ENCODE measurements at regions of chr17 and their contacts with region 1.

Region 1: GRCh38 chr17:74212913-74213791 is at the start of gene TTYH2:
- DNase-seq: peak; percentile 46 to 78 (median 55)
- ATAC-seq: peak; percentile 81
- H3K4me3 ChIP-seq: peak within 1 kb of the TSS; percentile 62
- H3K4me3 Mint-ChIP-seq: peak within 1 kb of the TSS; percentile 80 to 92 (median 91)
- H3K27ac ChIP-seq: peak within 1 kb of the TSS; percentile 55
- H3K27ac Mint-ChIP-seq: peak within 1 kb of the TSS; percentile 57 to 92 (median 82)
- H3K4me1 ChIP-seq: peaks cover 23 to 37% of the 10 kb centered on the region in 2 donors
- H3K4me1 Mint-ChIP-seq: peaks cover 27 to 51% (median 40%) of the 10 kb centered on the region in 7 donors
- H3K27me3 ChIP-seq: no peaks in the 10 kb centered on the region
- H3K27me3 Mint-ChIP-seq: peaks cover 0 to 5% (median 0%) of the 10 kb centered on the region in 5 donors
- total RNA-seq, gene TTYH2: 5.5 to 15.8 (median 9.9) TPM

Region 2: DNA sequence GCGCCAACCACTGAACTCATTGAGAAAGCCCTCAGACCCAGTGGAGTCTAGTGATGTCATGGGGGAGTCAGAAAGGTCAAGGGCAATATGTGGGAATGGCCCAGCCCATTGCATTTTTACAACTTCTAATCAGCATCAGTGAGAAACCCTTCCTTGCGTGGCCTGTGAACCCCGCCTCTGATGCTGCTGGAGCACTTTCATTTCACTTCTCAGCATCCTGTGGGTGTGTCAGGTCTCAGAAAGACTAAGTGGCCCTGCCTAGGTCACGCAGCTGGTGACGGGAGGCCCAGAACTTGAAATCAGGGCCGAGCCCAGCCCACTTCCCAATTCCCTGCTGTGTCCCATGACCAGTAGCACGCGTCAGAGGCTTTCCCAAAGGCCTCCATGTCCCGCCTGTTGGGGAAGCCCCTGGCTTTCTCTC is 67.0 kb after region 1 on chr17:
- CTCF ChIA-PET with region 1: interaction called, 3 read pairs
- POLR2A ChIA-PET with region 1: interaction called, 16 read pairs
- intact Hi-C with region 1: loop called (anchors 1 to 5 kb)
- DNase-seq: peak in 8 of 9 donors; percentile 16 to 59 (median 45)
- ATAC-seq: peak; percentile 87
- H3K4me3 ChIP-seq: no peak overlapping the region
- H3K4me3 Mint-ChIP-seq: peak overlapping the region in 7 of 10 donors; percentile 3 to 65 (median 25)
- H3K27ac ChIP-seq: peak overlapping the region; percentile 67
- H3K27ac Mint-ChIP-seq: peak overlapping the region; percentile 79 to 96 (median 90)
- H3K4me1 ChIP-seq: peaks cover 40 to 54% of the 10 kb centered on the region in 2 donors
- H3K4me1 Mint-ChIP-seq: peaks cover 16 to 67% (median 33%) of the 10 kb centered on the region in 7 donors
- H3K27me3 ChIP-seq: no peaks in the 10 kb centered on the region
- H3K27me3 Mint-ChIP-seq: no peaks in the 10 kb centered on the region

Region 3: DNA sequence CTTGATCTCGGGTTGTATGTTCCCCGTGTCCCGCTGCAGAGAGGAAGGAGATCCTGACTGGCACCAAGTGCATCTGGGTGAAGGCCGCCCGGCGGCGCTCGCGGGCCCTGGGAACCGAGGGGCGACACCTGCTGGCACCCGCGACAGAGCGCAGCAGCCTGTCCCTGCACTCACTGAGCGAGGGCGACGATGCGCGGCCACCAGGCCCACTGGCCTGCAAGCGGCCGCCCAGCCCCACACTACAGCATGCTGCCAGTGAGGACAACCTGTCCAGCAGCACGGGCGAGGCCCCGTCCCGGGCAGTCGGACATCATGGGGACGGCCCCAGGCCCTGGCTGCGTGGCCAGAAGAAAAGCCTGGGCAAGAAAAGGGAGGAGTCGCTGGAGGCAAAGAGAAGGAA is 141.0 kb after region 1 on chr17:
- CTCF ChIA-PET with region 1: interaction called, 3 read pairs
- POLR2A ChIA-PET with region 1: no interaction called
- intact Hi-C with region 1: loop called in 1 of 2 experiments (anchors 2 kb)
- DNase-seq: peak in 7 of 9 donors; percentile 15 to 71 (median 21)
- ATAC-seq: peak; percentile 75
- H3K4me3 ChIP-seq: no peak overlapping the region
- H3K4me3 Mint-ChIP-seq: no peak overlapping the region
- H3K27ac ChIP-seq: no peak overlapping the region
- H3K27ac Mint-ChIP-seq: no peak overlapping the region
- H3K4me1 ChIP-seq: no peaks in the 10 kb centered on the region
- H3K4me1 Mint-ChIP-seq: peaks cover 0 to 12% (median 8%) of the 10 kb centered on the region in 7 donors
- H3K27me3 ChIP-seq: peaks cover 0 to 16% of the 10 kb centered on the region in 2 donors
- H3K27me3 Mint-ChIP-seq: peaks cover 41 to 73% (median 45%) of the 10 kb centered on the region in 5 donors

Region 4: DNA sequence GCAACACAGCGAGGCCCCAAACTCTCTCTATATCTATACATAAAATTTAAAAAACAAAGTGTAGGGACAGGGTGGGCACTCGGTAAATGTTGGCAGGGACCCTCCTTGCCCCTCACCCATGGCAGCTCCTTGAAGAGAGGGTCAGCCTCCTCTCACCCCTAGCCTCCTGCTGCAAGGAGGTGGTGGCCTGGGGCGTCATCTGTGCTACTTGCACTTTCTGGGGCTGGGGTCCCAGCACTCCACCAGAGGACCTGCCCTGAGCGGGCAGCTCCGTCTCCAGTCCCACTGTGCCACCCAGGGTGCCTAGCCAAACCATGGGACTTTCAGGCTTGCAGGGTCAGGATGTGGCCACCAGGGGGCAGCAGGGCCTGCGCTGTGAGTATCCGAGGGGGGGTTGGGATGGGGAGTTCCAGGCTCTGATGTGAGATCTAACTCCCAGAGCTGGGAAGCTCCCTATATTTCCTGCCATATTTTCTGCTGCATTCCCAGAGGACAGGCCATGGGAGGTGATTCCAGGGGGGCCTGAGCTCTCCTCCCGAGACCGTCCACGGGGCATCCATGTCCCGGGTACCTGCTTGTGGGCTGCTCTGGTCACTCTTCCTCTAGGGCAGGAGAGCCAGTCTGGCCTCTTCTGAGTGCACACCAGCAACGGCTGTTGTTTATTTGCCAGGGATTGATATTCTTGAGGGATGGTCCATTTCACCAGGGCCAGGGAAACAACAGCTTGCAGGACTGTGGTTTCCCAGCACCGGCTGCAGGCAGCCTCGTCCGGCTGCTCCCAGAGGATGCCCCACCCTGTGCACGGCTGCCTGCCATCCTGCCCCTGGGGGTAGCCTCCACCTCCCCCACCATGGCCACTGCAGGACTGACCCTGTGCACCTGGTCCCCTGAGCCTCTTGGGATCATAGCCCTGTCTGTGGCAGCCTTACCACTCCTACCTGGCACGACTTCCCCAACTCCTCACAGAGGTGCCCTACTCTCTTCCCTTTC is 155.2 kb after region 1 on chr17:
- CTCF ChIA-PET with region 1: interaction called, 7 read pairs
- POLR2A ChIA-PET with region 1: no interaction called
- intact Hi-C with region 1: loop called in 1 of 2 experiments (anchors 2 kb)
- DNase-seq: peak; percentile 39 to 78 (median 59)
- ATAC-seq: peak; percentile 87
- H3K4me3 ChIP-seq: peak overlapping the region; percentile 43
- H3K4me3 Mint-ChIP-seq: peak overlapping the region in 9 of 10 donors; percentile 53 to 76 (median 68)
- H3K27ac ChIP-seq: no peak overlapping the region
- H3K27ac Mint-ChIP-seq: peak overlapping the region in 1 of 9 donors; percentile 36
- H3K4me1 ChIP-seq: peaks cover 12 to 13% of the 10 kb centered on the region in 2 donors
- H3K4me1 Mint-ChIP-seq: peaks cover 8 to 15% (median 12%) of the 10 kb centered on the region in 7 donors
- H3K27me3 ChIP-seq: no peaks in the 10 kb centered on the region
- H3K27me3 Mint-ChIP-seq: peaks cover 0 to 9% (median 0%) of the 10 kb centered on the region in 5 donors

Region 5: DNA sequence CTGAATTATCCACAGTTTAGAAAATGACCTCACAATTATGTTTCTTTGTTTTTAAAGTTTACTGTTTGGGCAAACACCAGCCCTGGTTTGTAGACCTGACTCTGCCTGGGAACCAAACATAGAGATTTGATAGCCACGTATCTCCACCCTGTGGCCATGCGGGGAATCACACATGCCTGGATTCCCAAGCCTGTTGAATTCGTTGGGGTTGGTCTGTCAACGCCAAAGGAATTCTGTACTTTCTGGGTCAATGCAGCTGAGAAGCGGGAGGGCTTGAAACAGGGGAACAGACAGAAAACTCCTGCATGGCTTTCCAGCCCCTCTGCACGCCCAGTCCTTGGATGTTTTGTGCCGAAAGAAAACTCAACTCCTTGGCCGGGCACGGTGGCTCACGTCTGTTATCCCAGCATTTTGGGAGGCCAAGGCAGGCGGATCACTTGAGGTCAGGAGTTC is 280.3 kb after region 1 on chr17:
- CTCF ChIA-PET with region 1: no interaction called
- POLR2A ChIA-PET with region 1: no interaction called
- intact Hi-C with region 1: loop called in 1 of 2 experiments (anchors 1 kb)
- DNase-seq: peak; percentile 39 to 73 (median 63)
- ATAC-seq: peak; percentile 90
- H3K4me3 ChIP-seq: no peak overlapping the region
- H3K4me3 Mint-ChIP-seq: no peak overlapping the region
- H3K27ac ChIP-seq: no peak overlapping the region
- H3K27ac Mint-ChIP-seq: no peak overlapping the region
- H3K4me1 ChIP-seq: peaks cover 0 to 10% of the 10 kb centered on the region in 2 donors
- H3K4me1 Mint-ChIP-seq: peaks cover 0 to 15% (median 4%) of the 10 kb centered on the region in 7 donors
- H3K27me3 ChIP-seq: no peaks in the 10 kb centered on the region
- H3K27me3 Mint-ChIP-seq: peaks cover 0 to 11% (median 0%) of the 10 kb centered on the region in 5 donors